ENCODE measurements at regions of chr11 and their contacts with region 1.

Region 1: DNA sequence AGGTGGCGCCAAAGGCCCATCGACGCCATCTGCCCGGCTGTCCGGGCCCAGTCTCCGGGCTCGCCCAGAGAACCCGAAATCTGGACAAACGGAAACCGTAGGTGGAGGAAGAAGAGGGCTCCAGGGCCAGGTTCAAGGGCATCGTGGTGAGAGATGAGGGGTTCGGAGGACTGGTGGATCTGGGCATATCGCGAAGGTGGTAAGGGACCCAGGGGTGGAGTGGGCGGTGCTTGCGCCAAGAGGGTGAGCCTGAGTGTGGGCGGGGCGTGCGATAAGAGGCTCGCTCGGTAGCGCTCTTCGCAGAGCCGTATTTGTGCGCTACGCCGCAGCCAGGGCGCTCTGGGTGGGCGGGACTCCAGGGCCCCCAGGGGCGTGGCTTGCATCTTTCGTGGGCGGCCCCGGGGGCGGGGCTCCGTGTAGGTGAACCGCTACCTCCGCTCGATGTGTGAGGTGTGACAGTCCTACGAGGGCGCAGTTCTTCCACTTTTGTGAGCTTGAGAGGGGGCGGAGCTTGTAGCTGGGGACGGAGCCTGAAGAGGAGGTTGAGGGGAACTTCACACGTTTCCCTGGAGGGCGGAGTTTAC is 4.8 kb downstream of the CD248 start:
- DNase-seq: peak; percentile 100
- ATAC-seq: peak; percentile 79
- H3K4me3 ChIP-seq: peak overlapping the region; percentile 30 to 72 (median 63)
- H3K4me3 Mint-ChIP-seq: peak overlapping the region; percentile 99
- H3K27ac ChIP-seq: peak overlapping the region; percentile 74 to 88
- H3K27ac Mint-ChIP-seq: peak overlapping the region; percentile 99
- H3K4me1 ChIP-seq: peaks cover 11 to 21% of the 10 kb centered on the region in 2 donors
- H3K4me1 Mint-ChIP-seq: peaks cover 28% of the 10 kb centered on the region
- H3K27me3 ChIP-seq: no peaks in the 10 kb centered on the region
- H3K27me3 Mint-ChIP-seq: peaks cover 3% of the 10 kb centered on the region
- CTCF ChIP-seq: peak; percentile 99

Region 2: DNA sequence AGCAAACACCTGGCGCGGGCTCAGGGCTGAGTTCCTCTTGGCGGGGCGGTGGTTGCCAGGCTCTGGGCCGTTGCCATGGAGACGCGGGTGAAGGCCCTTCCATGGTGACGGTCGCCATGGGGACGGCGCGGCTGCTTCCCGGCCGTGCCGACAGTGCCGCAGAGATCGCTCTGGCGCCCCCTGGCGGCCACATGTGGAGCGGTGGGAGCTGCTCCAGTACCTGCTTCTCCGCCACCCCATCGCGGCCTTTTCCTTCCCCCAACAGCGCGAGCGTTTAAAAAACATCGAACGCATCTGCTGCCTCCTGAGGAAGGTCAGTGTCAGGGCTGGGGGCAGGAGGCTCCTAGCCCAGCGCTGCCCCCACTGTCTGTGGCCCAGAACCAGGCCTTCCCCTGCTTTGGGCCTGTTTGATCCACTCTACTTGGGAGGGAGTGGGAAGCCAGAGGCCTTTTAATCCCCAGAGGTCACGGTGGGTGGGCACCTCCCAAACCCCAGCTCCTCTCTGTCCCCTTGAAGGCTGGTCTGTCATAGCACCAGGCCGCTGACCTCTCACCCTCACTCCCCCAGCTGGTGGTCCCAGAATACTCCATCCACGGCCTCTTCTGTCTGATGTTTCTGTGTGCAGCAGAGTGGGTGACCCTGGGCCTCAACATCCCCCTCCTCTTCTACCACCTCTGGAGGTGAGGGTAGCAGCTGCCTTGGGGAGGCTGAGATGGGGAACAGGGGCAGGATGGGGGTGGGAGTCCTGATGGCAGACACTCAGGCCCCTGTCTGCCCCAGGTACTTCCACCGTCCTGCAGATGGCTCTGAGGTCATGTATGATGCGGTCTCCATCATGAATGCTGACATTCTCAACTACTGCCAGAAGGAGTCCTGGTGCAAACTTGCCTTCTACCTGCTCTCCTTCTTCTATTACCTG is 29.3 kb before region 1 on chr11:
- CTCF ChIA-PET with region 1: interaction called, 19 read pairs
- POLR2A ChIA-PET with region 1: interaction called, 3 read pairs
- intact Hi-C with region 1: no loop called
- DNase-seq: peak; percentile 100
- ATAC-seq: peak; percentile 78
- H3K4me3 ChIP-seq: no peak overlapping the region
- H3K4me3 Mint-ChIP-seq: peak overlapping the region; percentile 60
- H3K27ac ChIP-seq: peak overlapping the region; percentile 59 to 80
- H3K27ac Mint-ChIP-seq: peak overlapping the region; percentile 95
- H3K4me1 ChIP-seq: peaks cover 22 to 36% of the 10 kb centered on the region in 2 donors
- H3K4me1 Mint-ChIP-seq: peaks cover 38% of the 10 kb centered on the region
- H3K27me3 ChIP-seq: peaks cover 0 to 16% (median 3%) of the 10 kb centered on the region in 4 experiments
- H3K27me3 Mint-ChIP-seq: peaks cover 3% of the 10 kb centered on the region
- CTCF ChIP-seq: peak; percentile 88

Region 3: GRCh38 chr11:66328307-66329144 is 16.5 kb after region 1 on chr11:
- CTCF ChIA-PET with region 1: interaction called, 101 read pairs
- POLR2A ChIA-PET with region 1: interaction called, 10 read pairs
- intact Hi-C with region 1: loop called (anchors 1 kb)
- DNase-seq: peak; percentile 89
- ATAC-seq: peak; percentile 98
- H3K4me3 ChIP-seq: peak overlapping the region in 1 of 5 experiments; percentile 30
- H3K4me3 Mint-ChIP-seq: peak overlapping the region; percentile 52
- H3K27ac ChIP-seq: no peak overlapping the region
- H3K27ac Mint-ChIP-seq: peak overlapping the region; percentile 47
- H3K4me1 ChIP-seq: peaks cover 15 to 25% of the 10 kb centered on the region in 2 donors
- H3K4me1 Mint-ChIP-seq: peaks cover 16% of the 10 kb centered on the region
- H3K27me3 ChIP-seq: no peaks in the 10 kb centered on the region
- H3K27me3 Mint-ChIP-seq: no peaks in the 10 kb centered on the region
- CTCF ChIP-seq: peak; percentile 93

Region 4: DNA sequence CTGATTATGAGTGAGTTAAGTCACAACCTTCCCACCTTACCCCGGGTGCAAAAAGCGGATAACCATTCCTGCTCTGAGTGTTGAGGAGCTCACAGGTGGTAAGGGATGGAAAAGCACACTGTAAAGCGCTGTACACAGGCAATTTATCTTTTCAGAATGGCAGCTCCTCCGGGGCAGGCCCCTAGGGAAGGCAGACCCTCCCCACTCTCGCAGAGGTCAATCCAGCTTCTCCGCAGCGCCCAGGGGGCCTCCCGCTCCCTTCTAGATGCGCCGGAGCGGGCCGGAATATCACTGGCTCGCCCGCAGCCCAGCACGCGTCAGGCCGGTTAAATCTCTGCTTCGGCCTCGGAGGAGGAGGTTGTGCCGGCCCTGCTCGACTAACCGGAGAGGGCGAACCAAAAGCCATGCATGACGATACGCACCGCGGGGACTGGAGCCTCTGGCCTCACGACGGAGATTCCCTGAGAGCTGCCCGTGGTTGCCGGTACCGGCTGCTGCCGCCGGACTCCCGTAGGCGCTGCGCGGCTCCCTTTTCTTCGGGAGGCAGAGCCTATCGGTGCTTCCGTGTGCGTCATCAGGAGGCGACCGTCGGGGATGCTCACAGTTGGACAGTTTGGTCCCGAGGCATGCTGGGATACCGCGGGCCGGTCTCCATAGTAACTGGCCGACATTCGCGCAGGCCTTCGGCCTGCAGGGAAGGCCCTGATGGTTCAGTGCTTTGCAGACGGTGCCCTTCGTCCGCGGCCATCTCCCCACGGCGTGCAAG is 32.7 kb after region 1 on chr11 and contains the start of gene BRMS1:
- CTCF ChIA-PET with region 1: interaction called, 44 read pairs
- POLR2A ChIA-PET with region 1: interaction called, 12 read pairs
- intact Hi-C with region 1: loop called (anchors 1 kb)
- DNase-seq: peak; percentile 96
- ATAC-seq: peak; percentile 85
- H3K4me3 ChIP-seq: peak within 1 kb of the TSS; percentile 74 to 92 (median 84)
- H3K4me3 Mint-ChIP-seq: peak within 1 kb of the TSS; percentile 97
- H3K27ac ChIP-seq: peak within 1 kb of the TSS; percentile 75 to 86
- H3K27ac Mint-ChIP-seq: peak within 1 kb of the TSS; percentile 96
- H3K4me1 ChIP-seq: peaks cover 19 to 44% of the 10 kb centered on the region in 2 donors
- H3K4me1 Mint-ChIP-seq: peaks cover 47% of the 10 kb centered on the region
- H3K27me3 ChIP-seq: no peaks in the 10 kb centered on the region
- H3K27me3 Mint-ChIP-seq: no peaks in the 10 kb centered on the region
- CTCF ChIP-seq: peak; percentile 16
- total RNA-seq, gene BRMS1: 50.9 and 58.3 TPM in 2 replicates

Region 5: DNA sequence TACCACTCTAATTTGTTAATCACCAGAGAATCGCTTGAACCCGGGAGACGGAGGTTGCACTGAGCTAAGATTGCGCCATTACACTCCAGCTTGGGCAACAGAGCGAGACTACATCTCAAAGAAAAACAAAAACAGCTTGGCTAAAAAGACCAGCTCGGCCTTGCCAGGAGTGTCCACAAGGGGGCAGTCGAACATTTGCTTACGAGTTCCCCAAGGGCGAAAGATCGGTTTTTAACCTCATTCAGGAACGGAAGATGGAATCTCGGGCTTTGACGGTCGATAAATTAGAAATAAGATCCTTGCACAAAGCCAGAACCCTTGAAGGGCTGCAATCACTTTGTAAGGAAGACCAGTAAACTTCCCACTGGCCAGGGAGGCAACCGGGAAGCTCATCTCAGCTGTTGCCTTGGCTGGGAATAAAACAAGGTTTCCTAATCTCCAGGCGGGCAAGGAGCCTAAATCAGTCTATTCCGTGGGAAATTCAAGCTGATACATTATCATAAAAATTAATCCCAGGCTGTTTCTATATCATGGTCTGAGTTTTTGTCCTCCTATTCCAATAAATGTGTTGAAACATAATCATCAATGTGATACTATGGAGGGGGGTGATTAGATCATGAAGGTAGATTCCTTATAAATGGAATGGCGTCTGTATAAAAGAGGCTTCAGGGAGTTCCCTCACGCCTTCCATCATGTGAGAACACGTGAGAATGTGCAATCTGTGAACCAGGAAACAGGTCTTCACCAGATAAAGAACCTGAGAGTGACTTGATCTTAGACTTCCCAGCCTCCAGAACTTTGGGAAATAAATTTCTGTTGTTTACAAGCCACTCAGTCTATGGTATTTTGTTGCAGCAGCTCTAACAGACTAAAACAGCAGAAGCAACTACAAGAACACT is 74.4 kb after region 1 on chr11:
- CTCF ChIA-PET with region 1: interaction called, 63 read pairs
- POLR2A ChIA-PET with region 1: interaction called, 4 read pairs
- intact Hi-C with region 1: loop called (anchors 1 kb)
- DNase-seq: peak; percentile 88
- ATAC-seq: peak; percentile 85
- H3K4me3 ChIP-seq: peak overlapping the region in 2 of 5 experiments; percentile 11 to 34
- H3K4me3 Mint-ChIP-seq: peak overlapping the region; percentile 21
- H3K27ac ChIP-seq: no peak overlapping the region
- H3K27ac Mint-ChIP-seq: no peak overlapping the region
- H3K4me1 ChIP-seq: peaks cover 7 to 12% of the 10 kb centered on the region in 2 donors
- H3K4me1 Mint-ChIP-seq: peaks cover 10% of the 10 kb centered on the region
- H3K27me3 ChIP-seq: no peaks in the 10 kb centered on the region
- H3K27me3 Mint-ChIP-seq: no peaks in the 10 kb centered on the region
- CTCF ChIP-seq: peak; percentile 94

Region 6: GRCh38 chr11:66466225-66467027 is 154.4 kb after region 1 on chr11 and contains the start of gene PELI3:
- CTCF ChIA-PET with region 1: interaction called, 3 read pairs
- POLR2A ChIA-PET with region 1: no interaction called
- intact Hi-C with region 1: loop called (anchors 1 kb)
- DNase-seq: peak; percentile 97
- ATAC-seq: peak; percentile 92
- H3K4me3 ChIP-seq: peak within 1 kb of the TSS; percentile 19 to 82 (median 71)
- H3K4me3 Mint-ChIP-seq: peak within 1 kb of the TSS; percentile 95
- H3K27ac ChIP-seq: peak within 1 kb of the TSS; percentile 81 to 84
- H3K27ac Mint-ChIP-seq: peak within 1 kb of the TSS; percentile 89
- H3K4me1 ChIP-seq: peaks cover 35 to 40% of the 10 kb centered on the region in 2 donors
- H3K4me1 Mint-ChIP-seq: peaks cover 35% of the 10 kb centered on the region
- H3K27me3 ChIP-seq: no peaks in the 10 kb centered on the region
- H3K27me3 Mint-ChIP-seq: no peaks in the 10 kb centered on the region
- CTCF ChIP-seq: no peak
- total RNA-seq, gene PELI3: 15.6 and 17.0 TPM in 2 replicates

Measured in B cell (primary cell).